ENCODE measurements at regions of chr13 and their contacts with region 1.

Region 1: DNA sequence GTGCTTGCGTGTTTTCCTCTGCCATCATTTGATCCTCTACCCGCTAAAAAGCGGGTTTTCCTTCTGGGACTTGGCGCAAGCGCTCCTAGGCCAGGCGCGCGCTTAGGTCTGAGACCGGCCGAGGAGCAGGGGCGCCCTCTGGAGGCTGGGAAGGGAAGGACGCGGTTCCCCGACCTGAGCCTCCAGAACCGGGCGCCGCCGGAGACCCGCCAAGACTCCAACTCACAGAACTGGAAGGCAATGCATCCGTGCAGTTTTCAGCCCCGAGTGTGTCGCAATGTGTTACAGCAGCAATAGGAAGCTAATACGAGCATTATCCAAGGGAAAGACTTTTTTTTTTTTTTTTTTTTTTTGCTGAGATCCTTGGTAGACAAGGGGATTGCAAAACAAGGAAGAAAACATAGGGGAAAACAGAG is 190.9 kb downstream of the COL4A1 start:
- DNase-seq: peak; percentile 77

Region 2: GRCh38 chr13:108961542-108962125 is 1154.4 kb before region 1 on chr13:
- in situ Hi-C with region 1: loop called (anchors 25 kb)
- DNase-seq: peak; percentile 61

Region 3: GRCh38 chr13:109162248-109163053 is 953.6 kb before region 1 on chr13:
- in situ Hi-C with region 1: loop called (anchors 25 kb)
- DNase-seq: peak; percentile 75

Measured in KBM-7 (cell line).